ENCODE measurements at regions of chr4 and their contacts with region 1.

Region 1: DNA sequence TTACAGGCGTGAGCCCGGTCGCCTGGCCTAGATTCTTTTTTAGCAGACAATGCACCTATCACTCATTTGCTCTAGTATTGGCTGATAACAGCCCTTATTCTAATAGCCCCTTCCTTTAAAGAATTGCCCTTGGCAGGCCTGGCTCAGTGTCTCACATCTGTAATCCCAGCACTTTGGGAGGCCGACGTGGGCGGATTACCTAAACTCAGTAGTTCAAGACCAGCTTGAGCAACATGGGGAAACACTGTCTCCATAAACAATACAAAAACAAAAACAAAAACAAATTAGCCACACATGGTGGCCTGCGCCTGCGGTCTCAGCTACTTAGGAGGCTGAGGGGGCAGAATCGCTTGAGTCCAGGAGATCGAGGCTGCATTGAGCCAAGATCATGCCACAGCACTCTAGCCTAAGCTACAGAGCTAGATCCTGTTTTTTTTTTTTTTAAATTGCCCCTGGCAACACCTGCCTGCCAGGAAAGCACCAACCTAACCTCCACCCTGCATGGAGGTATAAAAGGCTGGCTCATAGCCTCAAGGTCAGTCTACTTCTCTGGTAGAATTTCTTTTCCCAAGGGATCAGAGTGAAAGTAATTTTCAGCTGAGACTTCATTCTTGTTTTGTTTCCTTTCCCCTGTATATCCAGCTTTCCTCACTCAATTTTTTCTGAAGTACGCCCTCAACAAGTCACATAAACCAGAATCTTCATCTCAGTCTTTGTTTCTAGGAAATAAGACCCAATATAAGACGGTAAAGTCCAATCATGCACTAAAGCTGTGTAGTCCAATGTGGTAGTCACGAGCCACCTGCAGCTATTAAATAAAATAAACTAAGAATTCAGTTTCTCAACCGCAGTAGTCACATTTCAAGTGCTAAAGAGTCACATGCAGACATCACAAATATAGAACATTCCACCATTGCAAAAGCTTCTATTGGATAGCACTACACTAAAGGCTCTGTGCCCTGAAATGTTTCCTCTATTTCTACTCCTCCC is 113.4 kb downstream of the HPGD start:
- DNase-seq: no peak
- ATAC-seq: no peak
- H3K4me3 ChIP-seq: no peak overlapping the region
- H3K4me3 Mint-ChIP-seq: no peak overlapping the region
- H3K27ac ChIP-seq: no peak overlapping the region
- H3K27ac Mint-ChIP-seq: no peak overlapping the region
- H3K4me1 ChIP-seq: no peaks in the 10 kb centered on the region
- H3K4me1 Mint-ChIP-seq: no peaks in the 10 kb centered on the region
- H3K27me3 ChIP-seq: no peaks in the 10 kb centered on the region
- H3K27me3 Mint-ChIP-seq: no peaks in the 10 kb centered on the region

Region 2: DNA sequence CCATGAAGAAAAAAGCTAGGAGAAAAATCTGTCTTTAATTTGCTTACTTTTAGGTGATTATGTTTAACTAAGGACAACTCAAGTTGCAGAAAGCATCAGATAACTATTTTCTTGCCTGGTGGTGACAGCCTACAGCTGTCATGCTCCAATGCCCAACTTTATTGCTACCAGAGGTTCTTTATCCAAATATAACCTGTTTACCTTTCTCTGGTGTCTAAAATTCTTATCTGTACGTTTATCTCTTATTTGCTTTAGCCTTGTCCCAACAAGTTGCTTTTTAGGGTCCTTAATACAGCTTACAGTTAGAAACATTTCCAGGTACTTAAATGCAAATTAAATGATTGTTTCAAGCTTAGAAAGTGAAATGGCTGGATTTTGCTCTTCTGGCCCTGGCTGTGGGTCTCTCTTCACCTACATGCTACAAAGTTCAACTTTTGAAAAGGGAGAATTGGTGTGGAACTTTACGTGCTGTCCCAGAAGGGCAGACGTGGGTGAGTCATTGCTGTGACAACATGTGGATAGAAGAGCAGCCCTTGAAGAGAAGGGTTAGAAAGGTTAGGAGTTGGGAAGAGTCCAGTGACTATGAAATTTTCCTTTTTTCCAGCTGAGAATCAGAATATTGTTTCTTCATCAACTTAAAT is 52.7 kb after region 1 on chr4:
- CTCF ChIA-PET with region 1: no interaction called
- POLR2A ChIA-PET with region 1: no interaction called
- DNase-seq: no peak
- ATAC-seq: no peak
- H3K4me3 ChIP-seq: no peak overlapping the region
- H3K4me3 Mint-ChIP-seq: no peak overlapping the region
- H3K27ac ChIP-seq: no peak overlapping the region
- H3K27ac Mint-ChIP-seq: no peak overlapping the region
- H3K4me1 ChIP-seq: no peaks in the 10 kb centered on the region
- H3K4me1 Mint-ChIP-seq: no peaks in the 10 kb centered on the region
- H3K27me3 ChIP-seq: no peaks in the 10 kb centered on the region
- H3K27me3 Mint-ChIP-seq: peaks cover 0 to 6% of the 10 kb centered on the region in 2 donors

Region 3: DNA sequence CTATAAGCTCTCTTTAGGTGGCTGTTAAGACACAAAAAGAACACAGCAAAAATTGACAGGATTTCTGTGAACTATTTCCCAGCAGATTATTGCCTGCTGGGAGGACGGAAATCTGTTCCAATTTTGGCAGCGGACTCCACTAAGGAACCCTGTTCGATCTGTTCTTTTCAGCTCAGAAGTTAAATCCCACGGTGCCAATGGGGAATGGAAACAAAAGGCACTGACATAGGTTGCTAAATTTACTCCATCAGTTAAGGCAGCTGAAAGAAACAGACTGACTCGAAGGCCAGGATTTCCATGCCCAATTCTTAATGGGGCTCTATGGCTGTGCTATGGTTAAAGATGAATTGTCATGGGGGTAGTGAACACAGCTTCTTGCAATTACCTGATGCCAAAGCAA is 240.0 kb after region 1 on chr4:
- CTCF ChIA-PET with region 1: no interaction called
- POLR2A ChIA-PET with region 1: interaction called in 1 of 2 experiments, 11 read pairs
- DNase-seq: no peak
- ATAC-seq: no peak
- H3K4me3 ChIP-seq: no peak overlapping the region
- H3K4me3 Mint-ChIP-seq: no peak overlapping the region
- H3K27ac ChIP-seq: no peak overlapping the region
- H3K27ac Mint-ChIP-seq: no peak overlapping the region
- H3K4me1 ChIP-seq: no peaks in the 10 kb centered on the region
- H3K4me1 Mint-ChIP-seq: no peaks in the 10 kb centered on the region
- H3K27me3 ChIP-seq: peaks cover 0 to 3% of the 10 kb centered on the region in 2 experiments
- H3K27me3 Mint-ChIP-seq: no peaks in the 10 kb centered on the region